Prostate gland (tissue), 2 donors: ENCODE measurements at regions of chr14 and their contacts with region 1.

Region 1: DNA sequence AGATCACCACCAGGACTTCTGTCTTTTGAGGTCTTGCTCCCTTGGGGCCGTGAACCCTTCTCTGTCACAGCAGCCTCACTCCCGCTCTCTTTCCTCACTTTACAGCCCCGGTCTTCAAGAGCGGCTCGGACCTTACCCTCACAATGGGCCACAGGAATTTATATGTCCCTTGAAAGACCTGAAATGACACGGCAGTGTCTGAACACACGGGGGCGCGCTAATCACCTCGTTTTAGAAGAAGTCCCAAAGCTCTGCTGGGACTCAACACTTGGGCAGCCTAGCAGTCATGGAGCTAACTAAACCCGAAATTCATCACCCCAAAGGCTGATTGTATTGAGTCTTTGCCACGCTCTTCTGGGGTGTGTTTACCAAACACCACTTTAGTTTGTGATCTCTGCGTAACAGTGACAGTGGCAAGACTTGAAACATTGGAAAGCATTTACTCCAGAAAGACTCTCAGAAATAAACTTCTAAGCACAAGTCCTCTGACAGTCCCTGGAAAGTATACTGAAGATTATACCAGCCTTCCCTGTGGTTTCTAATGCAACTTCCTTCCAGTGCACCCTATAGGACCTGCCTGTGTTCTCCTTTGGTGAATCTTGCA is 29.0 kb downstream of the SERPINA11 start:
- DNase-seq: peak; percentile 69
- H3K4me3 ChIP-seq: no peak overlapping the region
- H3K27ac ChIP-seq: no peak overlapping the region
- H3K4me1 ChIP-seq: no peaks in the 10 kb centered on the region
- H3K27me3 ChIP-seq: no peaks in the 10 kb centered on the region
- CTCF ChIP-seq: peak in 3 of 4 experiments; percentile 44 to 59 (median 49)
- POLR2A ChIP-seq: no peak

Region 2: DNA sequence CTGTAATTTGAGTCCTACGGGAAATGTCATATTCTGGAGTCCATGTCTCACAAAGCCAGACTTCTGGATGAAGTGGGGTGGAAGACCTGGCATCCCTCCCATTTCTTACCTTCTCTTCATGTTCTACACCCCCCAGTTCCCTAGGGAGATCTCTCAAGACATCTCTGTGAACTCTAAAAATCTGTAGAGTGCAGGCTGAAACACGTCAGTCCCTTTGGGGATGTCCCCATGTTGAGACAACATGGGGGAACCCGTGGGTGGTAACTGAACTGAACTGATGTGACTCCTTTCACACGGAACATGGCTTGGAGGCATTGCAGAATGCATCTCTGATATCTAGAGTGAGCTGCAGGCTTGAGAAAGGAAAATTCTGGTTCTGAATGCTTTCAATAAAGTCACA is 70.5 kb after region 1 on chr14:
- intact Hi-C with region 1: loop called (anchors 5 kb)
- DNase-seq: no peak
- H3K4me3 ChIP-seq: no peak overlapping the region
- H3K27ac ChIP-seq: no peak overlapping the region
- H3K4me1 ChIP-seq: no peaks in the 10 kb centered on the region
- H3K27me3 ChIP-seq: no peaks in the 10 kb centered on the region
- CTCF ChIP-seq: no peak
- POLR2A ChIP-seq: no peak

Region 3: GRCh38 chr14:94665121-94665520 is 241.6 kb after region 1 on chr14:
- intact Hi-C with region 1: no loop called
- DNase-seq: no peak
- H3K4me3 ChIP-seq: no peak overlapping the region
- H3K27ac ChIP-seq: no peak overlapping the region
- H3K4me1 ChIP-seq: no peaks in the 10 kb centered on the region
- H3K27me3 ChIP-seq: no peaks in the 10 kb centered on the region
- CTCF ChIP-seq: no peak
- POLR2A ChIP-seq: no peak